Aorta (tissue), 5 donors: ENCODE measurements at regions of chr1 and their contacts with region 1.

Region 1: DNA sequence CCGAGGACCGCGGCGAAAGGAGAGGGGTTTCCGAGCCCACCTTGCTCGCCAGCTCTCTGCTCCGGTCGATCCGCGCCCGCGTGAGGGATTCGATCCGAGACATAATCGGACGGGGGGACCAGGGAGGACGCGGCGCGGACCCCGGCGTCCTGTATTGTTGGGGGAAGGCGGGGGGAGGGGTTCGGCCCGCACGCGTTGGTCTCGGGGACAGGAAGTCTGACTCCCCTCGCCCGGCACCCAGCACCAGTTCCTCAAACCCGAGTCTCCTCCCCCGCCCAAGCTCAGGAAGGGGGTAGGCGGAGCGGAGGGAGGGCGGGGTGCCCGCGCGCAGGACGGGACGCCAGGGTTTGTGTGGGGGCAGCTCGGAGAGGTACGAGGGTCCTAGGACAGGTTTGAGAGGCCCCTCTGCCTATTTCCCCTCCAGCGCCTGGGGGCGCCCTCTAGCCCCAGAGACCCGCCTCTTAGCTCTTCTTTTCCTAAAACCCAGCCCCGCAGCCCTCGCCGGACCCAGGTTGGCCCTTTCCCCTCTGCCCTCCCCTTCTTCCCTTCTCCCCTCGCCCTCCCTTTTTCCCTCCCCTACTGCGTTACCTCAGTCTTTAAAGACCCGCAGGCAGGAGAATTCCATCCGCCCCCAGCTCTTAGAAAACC is at the start of gene ARHGEF2:
- DNase-seq: peak; percentile 93 to 94
- ATAC-seq: peak; percentile 80
- H3K4me3 ChIP-seq: peak within 1 kb of the TSS; percentile 95 to 96
- H3K27ac ChIP-seq: peak within 1 kb of the TSS; percentile 68 to 93
- H3K4me1 ChIP-seq: peaks cover 0 to 10% of the 10 kb centered on the region in 2 donors
- H3K27me3 ChIP-seq: no peaks in the 10 kb centered on the region
- total RNA-seq, gene ARHGEF2: 175 to 217 TPM

Region 2: GRCh38 chr1:155913969-155914757 is 64.3 kb before region 1 on chr1:
- intact Hi-C with region 1: no loop called
- DNase-seq: no peak
- ATAC-seq: no peak
- H3K4me3 ChIP-seq: no peak overlapping the region
- H3K27ac ChIP-seq: no peak overlapping the region
- H3K4me1 ChIP-seq: no peaks in the 10 kb centered on the region
- H3K27me3 ChIP-seq: no peaks in the 10 kb centered on the region

Region 3: DNA sequence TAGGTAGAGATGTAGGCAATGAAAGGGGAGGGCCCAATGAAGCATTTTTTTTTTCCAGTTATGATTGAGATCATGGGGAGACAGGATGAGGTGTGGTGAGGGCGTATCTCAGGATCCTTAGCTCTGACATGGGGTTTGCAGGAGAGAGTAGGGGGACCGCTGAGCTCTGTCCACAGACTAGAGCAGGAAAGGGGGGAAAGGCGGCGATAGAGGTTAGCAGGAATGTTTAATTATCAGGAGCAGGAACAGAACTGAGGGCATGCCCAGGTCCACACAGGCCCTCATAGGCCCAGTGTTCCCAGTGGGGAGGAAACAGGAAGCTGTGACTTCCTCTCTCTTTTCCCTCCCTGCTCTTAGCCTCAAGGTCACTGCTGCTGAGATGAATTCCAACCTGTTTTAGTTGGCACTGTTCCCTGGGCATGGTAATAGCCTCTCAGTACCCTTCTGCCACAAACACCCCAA is 37.9 kb before region 1 on chr1:
- intact Hi-C with region 1: loop called in 1 of 2 experiments (anchors 5 kb)
- DNase-seq: no peak
- ATAC-seq: peak; percentile 68
- H3K4me3 ChIP-seq: no peak overlapping the region
- H3K27ac ChIP-seq: peak overlapping the region; percentile 61 to 82
- H3K4me1 ChIP-seq: peaks cover 0 to 2% of the 10 kb centered on the region in 2 donors
- H3K27me3 ChIP-seq: no peaks in the 10 kb centered on the region